ENCODE measurements at regions of chr17 and their contacts with region 1.

Region 1: GRCh38 chr17:37570527-37571093 is 38.6 kb downstream of the SYNRG start:
- DNase-seq: peak; percentile 69 to 72
- H3K4me3 ChIP-seq: no peak overlapping the region
- H3K27ac ChIP-seq: no peak overlapping the region
- H3K4me1 ChIP-seq: no peaks in the 10 kb centered on the region
- H3K27me3 ChIP-seq: no peaks in the 10 kb centered on the region
- CTCF ChIP-seq: peak; percentile 69

Region 2: DNA sequence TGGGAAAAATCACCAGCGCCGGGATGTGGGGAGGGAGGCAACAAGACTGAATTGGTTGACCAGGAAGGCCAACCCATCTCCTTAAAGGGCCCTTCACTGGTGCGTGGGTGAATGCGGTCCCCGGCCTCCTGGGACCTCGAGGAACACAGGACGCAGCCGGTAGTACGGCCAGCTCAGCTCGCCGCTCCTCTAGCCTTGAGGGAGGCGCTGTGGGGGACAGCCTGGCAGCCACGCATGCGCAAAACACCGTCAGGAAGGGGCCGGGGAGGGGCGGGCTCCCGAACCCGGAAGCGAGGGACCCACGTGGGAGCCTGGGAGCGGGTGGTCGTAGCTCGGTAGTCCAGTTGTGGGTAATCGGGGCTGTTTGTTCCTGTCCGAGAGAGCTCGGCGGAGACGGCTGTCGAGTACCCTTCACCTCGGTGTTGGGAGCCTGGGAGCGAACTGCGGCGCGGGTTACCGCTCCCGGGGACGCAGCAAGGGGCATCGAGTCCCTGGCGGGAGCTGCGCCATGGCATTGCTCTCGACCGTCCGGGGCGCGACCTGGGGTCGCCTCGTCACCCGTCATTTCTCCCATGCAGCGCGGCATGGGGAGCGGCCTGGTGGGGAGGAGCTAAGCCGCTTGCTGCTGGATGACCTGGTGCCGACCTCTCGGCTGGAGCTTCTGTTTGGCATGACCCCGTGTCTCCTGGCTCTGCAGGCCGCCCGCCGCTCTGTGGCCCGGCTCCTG is 969.1 kb before region 1 on chr17 and contains the start of gene MRM1:
- CTCF ChIA-PET with region 1: no interaction called
- POLR2A ChIA-PET with region 1: no interaction called
- intact Hi-C with region 1: loop called (anchors 5 kb)
- DNase-seq: peak; percentile 86 to 90
- H3K4me3 ChIP-seq: peak within 1 kb of the TSS; percentile 77
- H3K27ac ChIP-seq: peak within 1 kb of the TSS; percentile 65
- H3K4me1 ChIP-seq: peaks cover 8% of the 10 kb centered on the region; the same call in 1 of the 2 replicates
- H3K27me3 ChIP-seq: no peaks in the 10 kb centered on the region
- CTCF ChIP-seq: no peak
- total RNA-seq, gene MRM1: 9.6 and 10.9 TPM in 2 replicates

Region 3: GRCh38 chr17:36703831-36704266 is 866.8 kb before region 1 on chr17:
- CTCF ChIA-PET with region 1: no interaction called
- POLR2A ChIA-PET with region 1: no interaction called
- intact Hi-C with region 1: no loop called
- DNase-seq: peak in 1 of 2 experiments; percentile 43
- H3K4me3 ChIP-seq: no peak overlapping the region
- H3K27ac ChIP-seq: no peak overlapping the region
- H3K4me1 ChIP-seq: no peaks in the 10 kb centered on the region
- H3K27me3 ChIP-seq: peaks cover 34% of the 10 kb centered on the region
- CTCF ChIP-seq: no peak

Region 4: DNA sequence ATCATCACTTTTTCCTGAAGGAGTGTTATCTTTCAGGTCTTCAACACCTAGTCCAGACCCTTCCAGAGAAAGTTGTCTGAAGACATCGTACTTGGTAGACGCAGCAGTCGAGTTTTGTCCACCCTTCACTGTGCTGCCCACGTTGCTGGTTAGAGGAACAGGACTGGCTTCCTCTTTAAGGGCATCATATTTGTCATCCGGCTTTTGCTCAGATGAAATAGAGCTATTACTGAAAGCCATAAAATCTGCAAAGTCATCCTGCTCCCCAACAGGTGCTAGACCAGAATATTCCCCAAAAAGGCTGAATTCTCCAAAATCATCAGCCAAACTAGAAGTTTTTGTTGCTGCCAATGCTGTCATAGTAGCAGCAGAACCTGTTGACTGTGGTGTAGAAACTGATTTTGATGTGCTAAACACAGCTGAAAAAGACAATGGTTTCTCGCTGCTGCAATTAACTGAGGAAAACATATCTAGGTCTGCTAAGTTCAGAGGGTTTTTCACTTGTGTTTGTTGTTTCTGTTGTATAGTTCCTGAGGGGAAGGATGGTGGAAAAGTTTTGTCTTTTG is 17.1 kb before region 1 on chr17:
- CTCF ChIA-PET with region 1: no interaction called
- POLR2A ChIA-PET with region 1: interaction called, 10 read pairs
- intact Hi-C with region 1: no loop called
- DNase-seq: no peak
- H3K4me3 ChIP-seq: no peak overlapping the region
- H3K27ac ChIP-seq: no peak overlapping the region
- H3K4me1 ChIP-seq: no peaks in the 10 kb centered on the region
- H3K27me3 ChIP-seq: no peaks in the 10 kb centered on the region
- CTCF ChIP-seq: no peak

Region 5: GRCh38 chr17:37737081-37737480 is 166.5 kb after region 1 on chr17:
- CTCF ChIA-PET with region 1: no interaction called
- POLR2A ChIA-PET with region 1: interaction called, 13 read pairs
- intact Hi-C with region 1: no loop called
- DNase-seq: no peak
- H3K4me3 ChIP-seq: no peak overlapping the region
- H3K27ac ChIP-seq: no peak overlapping the region
- H3K4me1 ChIP-seq: no peaks in the 10 kb centered on the region
- H3K27me3 ChIP-seq: peaks cover 38% of the 10 kb centered on the region
- CTCF ChIP-seq: peak; percentile 50

Region 6: GRCh38 chr17:37824534-37825485 is 254.2 kb after region 1 on chr17:
- CTCF ChIA-PET with region 1: no interaction called
- POLR2A ChIA-PET with region 1: no interaction called
- intact Hi-C with region 1: no loop called
- DNase-seq: peak in 1 of 2 experiments; percentile 62
- H3K4me3 ChIP-seq: no peak overlapping the region
- H3K27ac ChIP-seq: no peak overlapping the region
- H3K4me1 ChIP-seq: no peaks in the 10 kb centered on the region
- H3K27me3 ChIP-seq: no peaks in the 10 kb centered on the region
- CTCF ChIP-seq: no peak

Measured in PC-9 (cell line).